Tibial artery (tissue), 4 donors: ENCODE measurements at regions of chr6 and their contacts with region 1.

Region 1: DNA sequence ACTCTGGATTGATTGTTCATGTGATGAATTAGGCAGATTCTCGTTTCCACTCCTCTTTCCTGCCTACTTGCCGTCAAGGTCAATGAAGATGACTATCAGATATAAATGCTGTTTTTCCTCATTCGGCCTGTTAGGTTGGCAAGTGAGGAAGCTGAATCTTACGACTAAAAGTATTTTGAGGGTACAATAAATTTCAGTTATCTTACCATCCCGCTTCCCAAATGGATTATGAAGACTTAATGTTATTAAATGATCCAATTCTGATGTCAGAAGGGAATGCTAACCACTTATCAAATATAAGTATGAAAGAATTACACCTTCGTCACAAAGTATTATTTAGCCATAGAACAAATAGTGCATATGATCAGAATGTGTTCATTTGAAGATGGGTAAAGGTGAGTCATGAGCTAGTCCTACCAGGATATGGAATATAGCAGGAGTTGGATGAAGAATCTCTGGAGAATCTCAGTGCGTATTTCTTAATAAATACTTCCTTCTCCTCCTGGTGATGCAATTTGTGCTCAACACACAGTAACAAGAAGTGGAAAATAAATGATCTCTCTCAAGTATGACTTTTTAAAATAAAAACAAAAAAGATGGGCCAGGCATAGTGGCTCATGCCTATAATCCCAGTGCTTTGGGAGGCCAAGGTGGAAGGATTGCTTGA is 4.6 kb downstream of the GPLD1 start:
- DNase-seq: no peak
- H3K4me3 ChIP-seq: no peak overlapping the region
- H3K27ac ChIP-seq: no peak overlapping the region
- H3K4me1 ChIP-seq: no peaks in the 10 kb centered on the region
- H3K27me3 ChIP-seq: no peaks in the 10 kb centered on the region
- CTCF ChIP-seq: no peak

Region 2: GRCh38 chr6:24439858-24440539 is 44.8 kb before region 1 on chr6:
- intact Hi-C with region 1: loop called (anchors 5 kb)
- DNase-seq: no peak
- H3K4me3 ChIP-seq: no peak overlapping the region
- H3K27ac ChIP-seq: no peak overlapping the region
- H3K4me1 ChIP-seq: no peaks in the 10 kb centered on the region
- H3K27me3 ChIP-seq: no peaks in the 10 kb centered on the region
- CTCF ChIP-seq: no peak